ENCODE measurements at regions of chr1 and their contacts with region 1.

Region 1: DNA sequence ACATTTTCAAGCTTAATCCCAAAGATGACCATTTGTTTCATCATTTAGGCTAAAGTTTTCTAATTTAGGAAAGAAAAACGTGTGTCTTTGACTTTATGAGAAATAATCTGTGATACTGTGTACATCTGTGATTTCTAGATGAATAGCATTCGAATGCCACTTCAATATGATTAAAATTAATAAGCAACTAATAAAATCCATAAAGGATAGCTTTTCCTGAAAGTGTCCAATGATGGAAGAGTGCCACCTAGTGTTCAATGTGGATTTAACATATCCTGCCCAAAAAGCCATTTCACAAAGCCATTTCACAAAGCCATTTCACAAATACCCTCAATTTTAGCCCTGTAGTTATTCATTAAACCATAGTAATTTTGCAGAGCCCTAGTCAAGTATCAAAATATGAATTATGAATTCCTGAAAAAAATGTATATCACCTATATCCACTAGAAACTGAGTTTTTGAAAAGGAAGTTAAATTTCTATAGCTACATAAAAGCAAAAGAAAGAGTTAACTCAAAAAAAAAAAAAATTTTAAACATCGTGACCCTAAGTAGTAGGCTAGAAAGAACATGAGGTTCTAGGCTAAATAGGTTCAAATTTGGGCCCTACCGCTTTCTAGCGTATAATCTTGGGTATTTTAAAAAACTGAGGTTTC is 19.1 kb downstream of the NME7 start:
- DNase-seq: peak; percentile 74
- H3K4me3 ChIP-seq: no peak overlapping the region
- H3K27ac ChIP-seq: no peak overlapping the region
- H3K4me1 ChIP-seq: no peaks in the 10 kb centered on the region
- H3K27me3 ChIP-seq: no peaks in the 10 kb centered on the region
- CTCF ChIP-seq: peak; percentile 40 to 43
- POLR2A ChIP-seq: no peak

Region 2: DNA sequence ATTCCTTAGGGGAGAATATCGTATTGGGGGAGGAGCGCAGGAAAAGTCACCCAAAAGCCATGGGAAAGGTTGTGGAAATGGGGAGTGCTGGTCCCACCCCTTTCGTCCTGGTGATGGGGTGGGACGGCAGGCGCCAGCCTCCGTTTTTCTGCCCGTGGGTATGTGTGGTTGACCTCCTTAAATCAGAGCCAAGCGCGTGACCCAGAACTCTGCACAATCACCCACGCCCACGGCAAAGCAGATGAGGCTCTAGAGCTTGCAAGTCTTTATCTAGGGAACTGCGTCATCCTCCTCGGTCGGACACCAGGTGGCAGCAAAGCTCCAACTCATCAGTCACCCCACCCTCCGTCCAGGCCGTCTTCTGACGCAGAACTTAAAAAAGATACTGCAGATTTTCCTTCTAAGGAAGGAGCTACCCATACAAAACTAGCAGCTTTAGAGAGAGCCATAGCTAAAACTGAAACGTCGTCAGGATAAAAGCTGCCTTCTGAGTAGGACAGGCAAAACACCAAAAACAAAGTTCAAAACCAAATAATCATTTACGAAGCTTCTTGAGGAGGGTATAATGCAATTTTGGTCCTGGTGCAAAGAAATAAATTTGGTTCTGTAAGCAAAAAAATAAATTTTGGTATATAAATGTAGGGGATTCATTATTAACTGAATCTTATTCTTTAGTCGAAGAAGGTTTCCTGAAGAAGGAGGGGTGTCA is 1005.8 kb before region 1 on chr1:
- CTCF ChIA-PET with region 1: interaction called, 33 read pairs
- POLR2A ChIA-PET with region 1: no interaction called
- dilution Hi-C with region 1: no loop called
- intact Hi-C with region 1: loop called (anchors 5 kb)
- DNase-seq: peak; percentile 81
- H3K4me3 ChIP-seq: no peak overlapping the region
- H3K27ac ChIP-seq: no peak overlapping the region
- H3K4me1 ChIP-seq: peaks cover 5% of the 10 kb centered on the region
- H3K27me3 ChIP-seq: peaks cover 4 to 16% of the 10 kb centered on the region in 2 experiments
- CTCF ChIP-seq: peak; percentile 62 to 86
- POLR2A ChIP-seq: no peak

Region 3: GRCh38 chr1:168609133-168609715 is 739.3 kb before region 1 on chr1:
- CTCF ChIA-PET with region 1: interaction called, 282 read pairs
- POLR2A ChIA-PET with region 1: no interaction called
- dilution Hi-C with region 1: no loop called
- intact Hi-C with region 1: no loop called
- DNase-seq: peak; percentile 15
- H3K4me3 ChIP-seq: no peak overlapping the region
- H3K27ac ChIP-seq: no peak overlapping the region
- H3K4me1 ChIP-seq: no peaks in the 10 kb centered on the region
- H3K27me3 ChIP-seq: peaks cover 0 to 4% of the 10 kb centered on the region in 2 experiments
- CTCF ChIP-seq: no peak
- POLR2A ChIP-seq: no peak

Region 4: DNA sequence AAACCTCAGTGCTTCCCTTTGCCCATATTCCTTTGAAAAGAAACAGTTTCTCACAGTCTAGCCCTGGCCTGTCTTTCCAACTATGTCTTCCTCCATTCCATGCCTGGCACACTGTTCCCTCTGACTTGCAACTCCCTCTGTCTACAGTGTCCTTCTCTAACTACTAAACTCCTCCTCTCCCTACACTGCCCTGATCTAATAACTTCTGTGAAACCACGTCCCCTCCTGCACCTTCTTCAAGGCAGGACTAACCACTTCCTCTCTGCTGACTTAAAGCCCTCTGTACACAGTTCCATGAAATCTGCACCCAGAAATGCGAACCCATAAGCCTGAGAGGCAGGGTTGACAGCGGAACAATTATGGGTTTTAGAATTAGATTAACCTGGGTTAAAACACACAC is 304.2 kb before region 1 on chr1:
- CTCF ChIA-PET with region 1: no interaction called
- POLR2A ChIA-PET with region 1: no interaction called
- dilution Hi-C with region 1: no loop called
- intact Hi-C with region 1: loop called (anchors 5 kb)
- DNase-seq: no peak
- H3K4me3 ChIP-seq: no peak overlapping the region
- H3K27ac ChIP-seq: no peak overlapping the region
- H3K4me1 ChIP-seq: no peaks in the 10 kb centered on the region
- H3K27me3 ChIP-seq: no peaks in the 10 kb centered on the region
- CTCF ChIP-seq: no peak
- POLR2A ChIP-seq: no peak

Region 5: DNA sequence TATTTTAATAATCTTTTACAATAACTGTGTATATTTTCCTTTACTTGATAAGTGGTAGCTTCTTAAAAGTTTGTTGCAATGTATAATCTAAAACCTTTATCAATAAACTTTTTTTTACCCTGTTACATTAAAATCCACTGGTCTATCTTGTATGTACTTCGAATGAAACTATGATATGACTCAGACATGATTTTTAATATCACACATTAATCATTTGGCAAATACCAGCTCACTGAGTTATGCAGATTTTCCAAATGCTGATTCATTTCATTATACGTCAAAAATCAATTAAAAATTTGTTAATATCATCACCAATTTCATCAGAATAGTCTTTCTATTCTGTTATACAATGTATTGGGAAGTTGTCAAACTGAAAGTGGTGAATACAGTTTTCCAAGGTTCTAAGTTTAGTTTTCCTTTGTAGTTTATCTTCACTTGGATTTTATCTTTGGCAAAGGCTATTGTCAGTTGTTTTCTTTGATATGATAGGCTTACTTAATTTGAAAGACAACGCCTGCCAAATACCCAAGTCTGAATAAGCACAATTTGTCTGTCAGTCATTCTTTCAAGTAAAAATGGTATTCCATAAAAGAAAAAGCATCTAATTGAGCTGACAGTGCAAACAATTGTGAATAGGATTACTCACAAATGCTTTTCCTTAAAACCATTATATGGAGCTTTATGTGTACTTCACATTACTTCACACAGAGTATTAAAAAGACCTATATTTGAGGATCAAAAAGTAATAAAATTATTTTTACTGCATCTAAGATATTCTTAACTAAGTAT is 107.9 kb before region 1 on chr1:
- CTCF ChIA-PET with region 1: interaction called, 11 read pairs
- POLR2A ChIA-PET with region 1: no interaction called
- dilution Hi-C with region 1: no loop called
- intact Hi-C with region 1: no loop called
- DNase-seq: peak; percentile 58
- H3K4me3 ChIP-seq: peak overlapping the region in 1 of 3 experiments; percentile 27
- H3K27ac ChIP-seq: no peak overlapping the region
- H3K4me1 ChIP-seq: peaks cover 9% of the 10 kb centered on the region
- H3K27me3 ChIP-seq: no peaks in the 10 kb centered on the region
- CTCF ChIP-seq: no peak
- POLR2A ChIP-seq: no peak

Region 6: DNA sequence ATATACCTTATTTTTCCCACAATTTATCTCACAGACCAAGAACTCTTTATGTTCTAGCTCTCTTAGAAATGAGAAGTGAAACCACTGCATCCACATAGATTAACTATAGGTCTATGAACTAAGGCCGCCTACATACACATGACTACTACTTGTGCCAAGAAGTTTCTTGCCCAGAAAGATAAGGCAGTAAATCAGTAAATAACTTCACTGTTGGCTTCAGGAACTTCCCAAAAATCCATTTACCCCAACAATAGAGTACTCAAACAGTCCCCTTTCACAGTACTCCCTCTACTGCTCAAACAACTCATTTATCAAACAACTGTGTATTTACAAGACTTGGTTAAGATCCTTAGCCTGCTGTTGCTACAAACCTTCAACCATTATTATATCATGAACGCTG is 77.4 kb before region 1 on chr1:
- CTCF ChIA-PET with region 1: no interaction called
- POLR2A ChIA-PET with region 1: no interaction called
- dilution Hi-C with region 1: no loop called
- intact Hi-C with region 1: no loop called
- DNase-seq: no peak
- H3K4me3 ChIP-seq: no peak overlapping the region
- H3K27ac ChIP-seq: no peak overlapping the region
- H3K4me1 ChIP-seq: no peaks in the 10 kb centered on the region
- H3K27me3 ChIP-seq: no peaks in the 10 kb centered on the region
- CTCF ChIP-seq: no peak
- POLR2A ChIP-seq: no peak

Region 7: GRCh38 chr1:169361281-169361680 is 12.8 kb after region 1 on chr1:
- CTCF ChIA-PET with region 1: interaction called, 33 read pairs
- POLR2A ChIA-PET with region 1: interaction called, 3 read pairs
- dilution Hi-C with region 1: no loop called
- intact Hi-C with region 1: no loop called
- DNase-seq: no peak
- H3K4me3 ChIP-seq: no peak overlapping the region
- H3K27ac ChIP-seq: no peak overlapping the region
- H3K4me1 ChIP-seq: peaks cover 14% of the 10 kb centered on the region
- H3K27me3 ChIP-seq: no peaks in the 10 kb centered on the region
- CTCF ChIP-seq: no peak
- POLR2A ChIP-seq: no peak

Region 8: GRCh38 chr1:169565335-169566271 is 217.1 kb after region 1 on chr1:
- CTCF ChIA-PET with region 1: no interaction called
- POLR2A ChIA-PET with region 1: no interaction called
- dilution Hi-C with region 1: no loop called
- intact Hi-C with region 1: no loop called
- DNase-seq: peak; percentile 67
- H3K4me3 ChIP-seq: no peak overlapping the region
- H3K27ac ChIP-seq: no peak overlapping the region
- H3K4me1 ChIP-seq: peaks cover 8% of the 10 kb centered on the region
- H3K27me3 ChIP-seq: no peaks in the 10 kb centered on the region
- CTCF ChIP-seq: no peak
- POLR2A ChIP-seq: no peak

Region 9: GRCh38 chr1:169794530-169795416 is 446.3 kb after region 1 on chr1 and contains the start of gene METTL18:
- CTCF ChIA-PET with region 1: no interaction called
- POLR2A ChIA-PET with region 1: interaction called, 10 read pairs
- dilution Hi-C with region 1: no loop called
- intact Hi-C with region 1: no loop called
- DNase-seq: peak; percentile 97
- H3K4me3 ChIP-seq: peak within 1 kb of the TSS; percentile 29 to 92 (median 77)
- H3K27ac ChIP-seq: peak within 1 kb of the TSS; percentile 66
- H3K4me1 ChIP-seq: peaks cover 11% of the 10 kb centered on the region
- H3K27me3 ChIP-seq: no peaks in the 10 kb centered on the region
- CTCF ChIP-seq: peak in 1 of 2 donors; percentile 48
- POLR2A ChIP-seq: peak; percentile 56
- total RNA-seq, gene METTL18: 6.6 TPM in 2 replicates

Measured in endothelial cell of umbilical vein (primary cell).